Left cardiac atrium (tissue), 4 donors: ENCODE measurements at regions of chr11 and their contacts with region 1.

Region 1: GRCh38 chr11:17504330-17505107 is 27.9 kb upstream of the ABCC8 start:
- DNase-seq: peak; percentile 82
- ATAC-seq: peak; percentile 73 to 87

Region 2: DNA sequence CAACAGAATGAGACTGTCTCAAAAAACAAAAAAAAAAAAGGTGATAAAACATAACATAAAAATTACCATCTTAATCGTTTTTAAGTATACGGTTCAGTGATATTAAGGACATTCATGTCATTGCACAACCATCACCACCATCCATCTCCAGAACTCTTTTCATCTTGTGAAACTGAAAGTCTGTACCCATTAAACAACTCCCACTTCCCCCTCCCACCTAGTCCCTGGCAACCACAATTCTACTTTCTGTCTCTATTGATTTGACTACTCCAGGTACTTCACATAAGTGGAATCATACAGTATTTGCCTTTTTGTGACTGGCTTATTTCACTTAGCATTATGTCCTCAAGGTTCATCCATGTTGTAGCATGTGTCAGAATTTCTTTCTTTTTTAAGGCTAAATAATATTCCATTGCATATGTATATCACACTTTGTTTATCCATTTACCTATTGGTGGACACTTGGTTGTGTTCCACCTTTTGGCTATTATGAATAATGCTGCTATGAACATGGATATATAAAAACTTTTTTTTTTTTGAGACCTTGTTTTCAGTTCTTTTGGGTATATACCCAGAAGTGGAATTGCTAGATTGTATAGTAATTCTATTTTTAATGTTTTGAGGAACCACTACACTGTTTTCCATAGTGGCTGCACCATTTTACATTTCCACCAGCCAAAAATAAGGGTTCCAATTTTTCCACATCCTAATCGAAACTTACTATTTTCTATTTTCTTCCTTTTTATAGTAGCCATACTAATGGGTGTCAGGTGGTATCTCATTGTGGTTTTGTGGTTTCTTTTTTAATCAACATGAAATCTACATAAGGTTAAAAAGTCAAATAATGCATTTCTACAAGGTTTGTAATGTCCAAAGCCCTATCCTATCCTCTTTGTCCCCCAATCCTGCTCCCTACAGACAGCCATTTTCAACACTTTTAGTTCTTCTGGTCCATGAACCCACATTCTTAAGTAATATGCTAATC is 273.4 kb before region 1 on chr11:
- intact Hi-C with region 1: loop called (anchors 5 to 10 kb)
- DNase-seq: no peak
- ATAC-seq: no peak

Region 3: GRCh38 chr11:17383461-17383860 is 121.1 kb before region 1 on chr11:
- intact Hi-C with region 1: loop called (anchors 1 to 5 kb)
- DNase-seq: no peak
- ATAC-seq: no peak

Region 4: GRCh38 chr11:17389211-17389956 is 115.1 kb before region 1 on chr11:
- intact Hi-C with region 1: loop called in 1 of 2 experiments (anchors 5 kb)
- DNase-seq: peak; percentile 81
- ATAC-seq: peak; percentile 74 to 75

Region 5: GRCh38 chr11:17572359-17572690 is 67.8 kb after region 1 on chr11:
- intact Hi-C with region 1: no loop called
- DNase-seq: no peak
- ATAC-seq: peak; percentile 26 to 39